Common myeloid progenitor, CD34-positive (primary cell): ENCODE measurements at regions of chr10 and their contacts with region 1.

Region 1: DNA sequence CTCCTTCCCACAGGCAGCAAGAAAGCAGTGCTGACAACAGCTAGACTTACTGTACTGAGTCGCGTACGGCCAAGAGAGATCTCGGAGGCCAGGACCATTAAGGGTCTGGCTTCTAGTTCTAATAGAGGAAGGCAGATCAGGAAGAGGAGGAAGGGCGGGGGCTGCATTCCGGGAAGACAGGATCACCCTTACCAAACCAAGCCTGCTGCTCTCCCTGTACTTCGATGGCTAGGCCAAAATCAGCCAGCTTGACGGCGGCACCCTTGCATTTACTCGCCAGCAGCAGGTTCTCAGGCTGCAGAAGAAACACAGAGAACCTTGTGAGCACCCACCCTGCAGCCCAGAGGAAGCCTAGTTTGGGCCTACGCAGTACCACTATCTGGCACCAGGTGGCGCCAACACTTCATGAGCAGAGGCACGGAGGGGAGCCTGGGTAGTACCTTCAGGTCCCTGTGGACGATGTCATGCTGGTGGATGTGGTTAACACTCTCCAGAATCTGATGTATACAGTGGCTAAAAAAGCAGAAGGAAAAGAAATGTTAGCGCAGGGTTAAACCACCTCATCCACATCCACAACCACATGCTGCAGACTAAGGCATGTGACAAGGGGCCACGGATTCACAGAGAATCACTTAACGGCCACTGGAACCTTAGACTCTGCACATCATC is 25.4 kb downstream of the CAMK2G start:
- DNase-seq: peak; percentile 97 to 99 (median 99)
- H3K4me3 ChIP-seq: peak overlapping the region in 1 of 7 experiments; percentile 23
- H3K27ac ChIP-seq: no peak overlapping the region
- H3K4me1 ChIP-seq: peaks cover 7 to 31% (median 19%) of the 10 kb centered on the region in 4 experiments
- H3K27me3 ChIP-seq: no peaks in the 10 kb centered on the region

Region 2: GRCh38 chr10:73743905-73744663 is 104.9 kb before region 1 on chr10 and contains the start of gene SEC24C:
- CTCF ChIA-PET with region 1: no interaction called
- POLR2A ChIA-PET with region 1: no interaction called
- DNase-seq: peak; percentile 94 to 97 (median 96)
- H3K4me3 ChIP-seq: peak within 1 kb of the TSS; percentile 93 to 99 (median 96)
- H3K27ac ChIP-seq: peak within 1 kb of the TSS; percentile 93 to 98
- H3K4me1 ChIP-seq: peaks cover 11 to 23% (median 15%) of the 10 kb centered on the region in 4 experiments
- H3K27me3 ChIP-seq: no peaks in the 10 kb centered on the region

Region 3: DNA sequence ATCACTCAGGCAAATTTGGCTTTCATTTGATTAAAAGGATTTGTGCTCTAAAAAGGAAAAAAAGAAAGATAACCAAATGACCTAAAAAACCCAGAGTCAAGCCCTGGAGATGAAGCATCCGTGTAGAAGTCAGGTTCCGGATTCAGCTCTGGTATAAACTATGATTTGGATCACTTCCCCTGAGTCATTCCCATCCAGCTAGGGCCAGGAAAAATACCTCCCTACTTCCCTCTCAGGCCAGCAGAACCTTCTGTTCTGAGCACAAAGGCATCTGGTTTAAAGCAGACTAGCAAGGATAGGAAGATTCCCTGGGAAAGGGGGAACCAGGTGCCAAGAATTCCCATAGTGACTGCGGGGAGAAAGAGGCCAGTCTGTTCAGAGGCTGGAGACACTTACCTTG is 11.9 kb before region 1 on chr10:
- CTCF ChIA-PET with region 1: interaction called, 28 read pairs
- POLR2A ChIA-PET with region 1: no interaction called
- DNase-seq: no peak
- H3K4me3 ChIP-seq: no peak overlapping the region
- H3K27ac ChIP-seq: no peak overlapping the region
- H3K4me1 ChIP-seq: no peaks in the 10 kb centered on the region
- H3K27me3 ChIP-seq: no peaks in the 10 kb centered on the region

Region 4: DNA sequence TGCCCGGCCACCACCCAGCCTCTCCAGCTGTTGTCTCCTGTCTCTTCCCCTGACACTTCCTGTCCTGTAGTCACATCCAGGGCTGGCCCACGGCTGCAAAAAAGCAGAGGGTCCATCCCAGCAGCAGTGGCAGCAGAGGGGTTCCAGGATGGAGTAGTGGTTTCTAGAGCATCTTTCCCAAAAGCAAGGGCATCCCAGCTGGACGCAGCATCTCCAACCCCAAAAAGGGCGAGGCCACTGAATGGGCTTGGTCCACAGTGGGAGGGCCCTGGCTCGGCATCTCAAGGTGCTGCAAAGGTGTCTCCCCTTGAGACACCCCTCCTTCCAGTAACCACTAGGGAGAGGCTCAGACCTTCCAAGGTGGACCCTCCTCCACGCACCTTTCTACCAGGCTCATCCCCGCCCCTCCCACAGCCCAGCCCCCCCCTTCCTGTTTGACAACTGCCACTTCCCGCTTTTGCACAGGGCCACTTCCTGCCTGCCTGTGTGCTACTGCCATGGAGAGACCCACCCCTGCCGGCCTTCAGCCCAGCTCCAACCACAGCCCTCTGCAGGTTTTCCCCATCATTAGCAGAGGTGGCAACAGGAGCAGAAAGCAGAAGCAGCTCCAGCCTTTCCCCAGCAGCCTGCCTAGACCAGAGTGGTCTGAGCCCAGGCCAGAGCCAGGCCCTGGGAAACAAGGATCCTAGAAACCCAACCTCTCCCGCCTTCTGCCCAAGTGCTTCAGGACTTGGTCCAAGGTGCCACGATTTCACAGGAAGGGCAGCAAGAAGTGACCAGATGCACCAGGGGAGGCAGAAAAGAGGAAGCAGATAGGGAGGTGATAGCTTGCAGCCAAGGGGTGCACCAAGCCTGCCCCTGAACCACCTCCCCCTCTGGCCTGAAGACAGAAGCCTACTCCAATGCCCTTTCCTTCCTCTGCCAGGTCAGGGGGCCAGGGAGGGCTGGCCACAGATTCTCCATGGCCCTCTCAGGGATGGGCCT is 16.8 kb after region 1 on chr10:
- CTCF ChIA-PET with region 1: interaction called, 196 read pairs
- POLR2A ChIA-PET with region 1: interaction called, 3 read pairs
- DNase-seq: peak; percentile 82 to 96 (median 95)
- H3K4me3 ChIP-seq: peak overlapping the region in 5 of 7 experiments; percentile 6 to 68 (median 46)
- H3K27ac ChIP-seq: peak overlapping the region; percentile 33 to 81
- H3K4me1 ChIP-seq: peaks cover 26 to 92% (median 82%) of the 10 kb centered on the region in 4 experiments
- H3K27me3 ChIP-seq: no peaks in the 10 kb centered on the region